ENCODE measurements at regions of chr10 and their contacts with region 1.

Region 1: DNA sequence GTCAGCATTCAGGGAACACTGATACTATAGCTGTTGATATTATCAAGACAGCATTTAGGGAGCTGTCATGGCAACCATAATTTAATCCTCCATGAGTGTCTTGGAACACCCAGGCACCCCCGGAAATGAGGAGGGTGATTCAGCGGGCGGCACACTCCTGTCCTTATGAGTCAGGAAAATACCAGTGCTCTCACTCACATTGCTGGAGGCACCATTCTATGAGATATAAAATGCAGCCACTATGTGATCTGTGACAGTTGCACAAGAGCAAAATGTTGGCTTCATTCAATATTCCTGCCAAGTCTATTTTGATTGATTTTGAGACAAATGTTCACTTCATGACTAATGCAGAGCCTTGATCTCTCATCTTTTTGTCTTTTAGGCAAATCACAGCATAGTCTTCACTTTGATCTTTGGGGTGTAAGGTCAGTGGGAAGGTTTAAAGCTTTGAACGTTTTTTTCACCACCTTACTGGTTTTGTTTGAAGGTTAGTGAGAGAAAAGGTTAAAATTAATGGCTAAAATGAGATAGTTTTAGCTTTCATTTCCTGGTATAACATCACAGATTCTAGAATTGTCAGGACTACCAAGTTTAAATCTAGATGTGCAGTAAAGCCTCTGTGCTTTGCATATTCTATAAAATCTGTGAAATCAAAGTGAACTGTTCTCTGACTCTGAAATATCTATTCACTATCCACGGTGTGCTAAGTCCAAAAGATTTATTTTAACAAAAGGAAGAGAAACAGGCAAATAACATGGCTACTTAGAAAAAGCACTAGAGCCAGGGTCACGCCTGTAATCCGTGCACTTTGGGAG is 12.4 kb upstream of the ARHGAP12 start:
- DNase-seq: no peak
- ATAC-seq: no peak
- H3K4me3 ChIP-seq: no peak overlapping the region
- H3K4me3 Mint-ChIP-seq: no peak overlapping the region
- H3K27ac ChIP-seq: no peak overlapping the region
- H3K27ac Mint-ChIP-seq: no peak overlapping the region
- H3K4me1 ChIP-seq: no peaks in the 10 kb centered on the region
- H3K4me1 Mint-ChIP-seq: peaks cover 6% of the 10 kb centered on the region
- H3K27me3 ChIP-seq: no peaks in the 10 kb centered on the region
- H3K27me3 Mint-ChIP-seq: no peaks in the 10 kb centered on the region
- CTCF ChIP-seq: no peak

Region 2: GRCh38 chr10:30885423-30885822 is 1055.6 kb before region 1 on chr10:
- CTCF ChIA-PET with region 1: no interaction called
- POLR2A ChIA-PET with region 1: no interaction called
- intact Hi-C with region 1: loop called in 1 of 2 experiments (anchors 5 kb)
- DNase-seq: no peak
- ATAC-seq: no peak
- H3K4me3 ChIP-seq: no peak overlapping the region
- H3K4me3 Mint-ChIP-seq: no peak overlapping the region
- H3K27ac ChIP-seq: no peak overlapping the region
- H3K27ac Mint-ChIP-seq: no peak overlapping the region
- H3K4me1 ChIP-seq: no peaks in the 10 kb centered on the region
- H3K4me1 Mint-ChIP-seq: no peaks in the 10 kb centered on the region
- H3K27me3 ChIP-seq: no peaks in the 10 kb centered on the region
- H3K27me3 Mint-ChIP-seq: no peaks in the 10 kb centered on the region
- CTCF ChIP-seq: no peak